Naive thymus-derived CD4-positive, alpha-beta T cell (primary cell): ENCODE measurements at regions of chr1 and their contacts with region 1.

Region 1: DNA sequence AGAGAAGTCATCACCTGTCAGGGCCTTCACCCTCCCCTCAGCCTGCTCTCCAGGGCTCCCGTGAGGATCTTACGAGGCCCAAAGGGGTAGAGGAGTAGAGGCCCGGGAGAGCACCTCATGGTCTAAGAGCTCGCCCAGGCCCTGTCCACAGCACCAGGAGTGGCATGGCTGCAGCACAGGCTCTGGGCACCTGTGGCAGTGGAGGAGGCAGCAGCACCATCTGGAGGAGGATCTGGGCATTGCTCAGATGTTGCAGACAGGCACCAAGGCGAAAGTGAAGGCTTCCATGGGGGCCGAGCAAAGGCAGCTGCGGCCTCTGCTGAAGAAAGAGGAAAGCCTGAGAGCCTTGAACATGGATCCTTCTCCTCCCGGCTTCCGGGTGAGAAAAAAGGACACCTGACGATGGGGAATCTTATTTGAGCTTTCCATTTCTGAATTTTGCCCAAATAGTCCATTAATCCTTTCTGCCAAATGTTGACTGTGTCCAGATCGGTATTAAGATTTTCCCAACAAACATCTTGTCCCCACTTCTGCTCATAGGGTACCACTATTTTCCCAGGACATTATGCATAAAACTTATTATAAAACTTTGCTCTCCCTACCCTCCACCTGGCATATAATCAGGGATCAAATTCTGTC is 604.7 kb downstream of the PTPRC start:
- DNase-seq: peak; percentile 19 to 75 (median 41)
- ATAC-seq: peak; percentile 94
- H3K4me3 ChIP-seq: no peak overlapping the region
- H3K4me3 Mint-ChIP-seq: no peak overlapping the region
- H3K27ac ChIP-seq: no peak overlapping the region
- H3K27ac Mint-ChIP-seq: peak overlapping the region in 1 of 9 donors; percentile 26
- H3K4me1 ChIP-seq: no peaks in the 10 kb centered on the region
- H3K4me1 Mint-ChIP-seq: peaks cover 0 to 17% (median 0%) of the 10 kb centered on the region in 7 donors
- H3K27me3 ChIP-seq: no peaks in the 10 kb centered on the region
- H3K27me3 Mint-ChIP-seq: peaks cover 6 to 33% (median 7%) of the 10 kb centered on the region in 5 donors

Region 2: GRCh38 chr1:198756470-198756869 is 487.1 kb before region 1 on chr1:
- CTCF ChIA-PET with region 1: interaction called, 5 read pairs
- POLR2A ChIA-PET with region 1: no interaction called
- intact Hi-C with region 1: loop called in 1 of 2 experiments (anchors 2 kb)
- DNase-seq: no peak
- ATAC-seq: peak; percentile 41
- H3K4me3 ChIP-seq: no peak overlapping the region
- H3K4me3 Mint-ChIP-seq: no peak overlapping the region
- H3K27ac ChIP-seq: no peak overlapping the region
- H3K27ac Mint-ChIP-seq: peak overlapping the region in 4 of 9 donors; percentile 10 to 81 (median 34)
- H3K4me1 ChIP-seq: no peaks in the 10 kb centered on the region
- H3K4me1 Mint-ChIP-seq: peaks cover 5 to 36% (median 21%) of the 10 kb centered on the region in 7 donors
- H3K27me3 ChIP-seq: no peaks in the 10 kb centered on the region
- H3K27me3 Mint-ChIP-seq: no peaks in the 10 kb centered on the region

Region 3: DNA sequence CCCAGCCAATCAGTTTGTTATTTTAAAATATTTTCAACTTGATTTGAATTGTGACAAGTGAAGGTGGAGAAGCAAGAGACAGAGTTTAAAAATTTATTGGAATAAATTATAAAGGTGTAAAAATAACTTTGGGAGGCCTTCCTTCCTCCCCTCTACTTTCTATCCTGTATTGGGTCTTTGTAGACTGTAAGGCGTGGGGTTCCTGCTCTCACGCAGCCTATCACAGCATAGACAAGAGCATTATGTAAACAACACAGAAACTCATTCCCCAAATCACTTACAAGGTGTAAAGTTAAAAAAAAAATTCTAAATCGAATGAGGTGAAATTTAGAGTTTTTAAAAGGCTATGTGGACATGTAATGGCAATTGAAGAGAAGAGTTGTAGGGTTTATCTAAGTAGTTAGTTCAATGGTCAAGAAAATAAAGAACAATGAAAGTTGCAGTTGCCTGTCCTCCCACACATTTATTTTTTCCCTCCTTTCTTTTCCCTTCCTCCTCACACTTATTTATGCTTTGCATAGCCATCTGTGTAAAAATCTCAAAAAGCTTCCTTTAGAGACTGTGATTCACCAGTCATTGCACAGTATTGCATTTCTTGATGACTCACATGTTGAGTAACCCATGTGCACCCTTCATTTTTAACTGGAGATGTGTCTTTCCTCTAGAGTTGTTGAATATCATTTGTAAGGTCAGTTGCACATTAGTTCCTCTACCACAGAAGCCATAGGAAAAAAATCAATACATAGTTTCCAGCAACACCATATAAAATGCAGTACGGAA is 362.5 kb before region 1 on chr1:
- CTCF ChIA-PET with region 1: no interaction called
- POLR2A ChIA-PET with region 1: no interaction called
- intact Hi-C with region 1: loop called in 1 of 2 experiments (anchors 1 kb)
- DNase-seq: no peak
- ATAC-seq: peak; percentile 73
- H3K4me3 ChIP-seq: no peak overlapping the region
- H3K4me3 Mint-ChIP-seq: peak overlapping the region in 1 of 10 donors; percentile 16
- H3K27ac ChIP-seq: no peak overlapping the region
- H3K27ac Mint-ChIP-seq: peak overlapping the region in 1 of 9 donors; percentile 25
- H3K4me1 ChIP-seq: no peaks in the 10 kb centered on the region
- H3K4me1 Mint-ChIP-seq: peaks cover 0 to 45% (median 9%) of the 10 kb centered on the region in 7 donors
- H3K27me3 ChIP-seq: no peaks in the 10 kb centered on the region
- H3K27me3 Mint-ChIP-seq: no peaks in the 10 kb centered on the region

Region 4: GRCh38 chr1:199041173-199041914 is 202.2 kb before region 1 on chr1:
- CTCF ChIA-PET with region 1: no interaction called
- POLR2A ChIA-PET with region 1: no interaction called
- intact Hi-C with region 1: loop called in 1 of 2 experiments (anchors 5 kb)
- DNase-seq: peak in 7 of 9 donors; percentile 1 to 47 (median 28)
- ATAC-seq: peak; percentile 67
- H3K4me3 ChIP-seq: no peak overlapping the region
- H3K4me3 Mint-ChIP-seq: peak overlapping the region in 9 of 10 donors; percentile 5 to 81 (median 58)
- H3K27ac ChIP-seq: no peak overlapping the region
- H3K27ac Mint-ChIP-seq: peak overlapping the region in 4 of 9 donors; percentile 8 to 74 (median 61)
- H3K4me1 ChIP-seq: peaks cover 20 to 22% of the 10 kb centered on the region in 2 donors
- H3K4me1 Mint-ChIP-seq: peaks cover 20 to 54% (median 33%) of the 10 kb centered on the region in 7 donors
- H3K27me3 ChIP-seq: no peaks in the 10 kb centered on the region
- H3K27me3 Mint-ChIP-seq: peaks cover 0 to 2% (median 0%) of the 10 kb centered on the region in 5 donors

Region 5: DNA sequence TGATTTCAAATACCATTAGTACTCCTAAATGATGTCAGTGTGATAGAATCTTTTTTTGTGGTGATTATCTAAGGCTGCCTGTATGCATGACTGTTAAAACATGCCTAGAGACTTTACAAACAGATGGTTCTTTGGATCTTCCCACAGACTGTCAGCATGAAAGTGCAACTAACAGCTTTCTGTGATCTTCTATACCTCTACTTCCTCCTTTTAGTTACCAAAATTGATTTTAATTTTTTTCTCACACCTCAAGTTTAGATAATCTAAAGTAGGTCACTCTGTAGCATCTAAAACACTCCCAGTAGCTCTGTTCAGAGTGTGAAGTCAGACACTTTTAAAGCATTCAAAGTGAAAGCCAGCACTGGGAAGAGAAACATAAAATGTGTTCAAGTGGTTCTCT is 70.2 kb before region 1 on chr1:
- CTCF ChIA-PET with region 1: no interaction called
- POLR2A ChIA-PET with region 1: no interaction called
- intact Hi-C with region 1: loop called in 1 of 2 experiments (anchors 5 kb)
- DNase-seq: peak in 7 of 9 donors; percentile 9 to 56 (median 25)
- ATAC-seq: peak; percentile 90
- H3K4me3 ChIP-seq: no peak overlapping the region
- H3K4me3 Mint-ChIP-seq: peak overlapping the region in 7 of 10 donors; percentile 8 to 55 (median 32)
- H3K27ac ChIP-seq: no peak overlapping the region
- H3K27ac Mint-ChIP-seq: peak overlapping the region in 8 of 9 donors; percentile 4 to 73 (median 44)
- H3K4me1 ChIP-seq: peaks cover 23 to 48% of the 10 kb centered on the region in 2 donors
- H3K4me1 Mint-ChIP-seq: peaks cover 28 to 56% (median 43%) of the 10 kb centered on the region in 7 donors
- H3K27me3 ChIP-seq: no peaks in the 10 kb centered on the region
- H3K27me3 Mint-ChIP-seq: peaks cover 0 to 14% (median 0%) of the 10 kb centered on the region in 5 donors

Region 6: GRCh38 chr1:199945591-199945990 is 702.0 kb after region 1 on chr1:
- CTCF ChIA-PET with region 1: no interaction called
- POLR2A ChIA-PET with region 1: no interaction called
- intact Hi-C with region 1: no loop called
- DNase-seq: no peak
- ATAC-seq: no peak
- H3K4me3 ChIP-seq: no peak overlapping the region
- H3K4me3 Mint-ChIP-seq: no peak overlapping the region
- H3K27ac ChIP-seq: no peak overlapping the region
- H3K27ac Mint-ChIP-seq: no peak overlapping the region
- H3K4me1 ChIP-seq: peaks cover 0 to 4% of the 10 kb centered on the region in 2 donors
- H3K4me1 Mint-ChIP-seq: peaks cover 3 to 15% (median 12%) of the 10 kb centered on the region in 7 donors
- H3K27me3 ChIP-seq: peaks cover 0 to 5% of the 10 kb centered on the region in 2 donors
- H3K27me3 Mint-ChIP-seq: peaks cover 5 to 54% (median 14%) of the 10 kb centered on the region in 5 donors